ENCODE measurements at regions of chr17 and their contacts with region 1.

Region 1: DNA sequence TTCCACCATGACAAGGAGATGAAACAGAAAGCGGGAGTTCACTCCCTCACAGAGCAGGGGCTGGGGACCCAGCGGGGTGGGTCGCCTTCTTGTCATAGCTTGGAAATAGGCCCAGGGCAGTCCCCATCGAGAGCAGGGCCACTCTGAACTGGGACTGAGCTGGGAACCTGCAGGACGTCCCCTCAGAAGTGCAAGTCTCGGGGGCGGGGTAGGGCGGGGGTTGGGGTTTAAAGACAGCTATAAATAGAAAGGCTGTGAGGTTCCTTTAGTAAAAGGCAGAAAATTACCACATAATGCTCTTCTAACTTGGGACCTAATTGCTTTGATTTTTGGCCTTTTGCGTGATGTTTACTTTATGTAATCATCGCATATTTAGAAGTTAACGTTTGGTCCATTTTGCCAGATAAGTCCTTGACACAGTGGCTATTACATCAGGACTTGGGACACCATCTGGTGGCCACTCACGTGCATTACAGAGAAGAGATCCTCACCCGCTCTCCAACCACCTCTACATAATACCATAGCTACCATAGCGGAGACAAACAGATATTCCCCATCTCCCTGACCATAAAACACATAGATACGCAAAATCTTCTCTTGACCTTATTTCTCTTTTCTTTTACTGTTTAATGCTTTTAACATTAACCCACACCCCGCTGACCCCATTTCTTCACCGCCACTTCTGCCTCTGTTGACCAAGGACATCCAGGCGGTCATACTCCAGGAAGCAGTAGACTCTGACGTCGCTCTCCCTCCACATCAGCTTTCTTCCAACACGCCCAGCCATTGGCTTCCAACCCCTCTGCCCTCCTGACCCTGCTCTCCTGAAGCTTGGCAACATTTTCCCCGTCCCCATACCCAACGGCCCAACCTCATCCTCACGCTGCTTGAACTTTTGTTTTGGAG is 27.5 kb upstream of the PIK3R6 start:
- DNase-seq: peak; percentile 58
- H3K4me3 Mint-ChIP-seq: no peak overlapping the region
- H3K27ac Mint-ChIP-seq: no peak overlapping the region
- H3K4me1 Mint-ChIP-seq: peaks cover 8% of the 10 kb centered on the region
- H3K27me3 Mint-ChIP-seq: peaks cover 57% of the 10 kb centered on the region
- CTCF ChIP-seq: peak; percentile 31

Region 2: GRCh38 chr17:8753976-8754440 is 140.9 kb before region 1 on chr17:
- CTCF ChIA-PET with region 1: no interaction called
- intact Hi-C with region 1: loop called (anchors 2 kb)
- DNase-seq: no peak
- H3K4me3 Mint-ChIP-seq: no peak overlapping the region
- H3K27ac Mint-ChIP-seq: no peak overlapping the region
- H3K4me1 Mint-ChIP-seq: no peaks in the 10 kb centered on the region
- H3K27me3 Mint-ChIP-seq: peaks cover 82% of the 10 kb centered on the region
- CTCF ChIP-seq: no peak

Region 3: DNA sequence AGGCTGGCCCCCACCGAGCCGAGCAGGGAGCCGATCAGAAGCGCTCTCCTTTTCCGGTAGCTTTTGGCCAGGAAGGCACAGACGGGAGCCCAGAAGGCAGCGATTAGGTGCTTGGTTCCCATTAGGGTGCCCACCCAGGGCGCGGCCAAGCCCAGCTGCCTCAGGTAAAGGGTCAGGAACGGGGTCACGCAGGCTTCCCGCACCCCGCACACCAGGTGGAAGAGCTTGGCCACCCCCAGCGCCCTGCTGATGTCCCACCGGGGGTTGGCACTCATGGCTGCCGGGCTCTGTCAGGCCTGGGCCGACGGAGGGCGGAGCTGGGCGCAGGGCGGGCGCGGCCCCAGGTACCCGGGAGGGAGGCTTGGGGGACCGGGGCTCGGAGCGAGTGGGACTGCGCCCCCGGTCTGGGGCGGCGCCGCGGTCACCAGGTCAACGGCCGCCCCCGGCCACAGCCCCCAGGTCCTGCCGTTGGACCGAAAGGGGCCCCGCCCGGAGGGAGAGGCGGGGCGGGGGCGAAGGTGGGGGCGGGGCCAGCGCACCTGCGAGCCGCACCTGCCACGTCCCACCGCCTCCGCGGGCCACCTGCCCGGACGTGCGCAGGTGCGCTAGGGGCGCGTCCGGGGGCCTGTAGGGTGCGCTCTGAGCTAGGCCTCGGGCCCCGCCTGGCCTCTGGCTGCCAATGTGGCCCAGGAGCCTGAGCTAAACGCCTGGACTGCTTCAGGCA is 95.9 kb before region 1 on chr17 and contains the start of gene MFSD6L:
- CTCF ChIA-PET with region 1: interaction called, 10 read pairs
- intact Hi-C with region 1: loop called (anchors 2 kb)
- DNase-seq: peak; percentile 63
- H3K4me3 Mint-ChIP-seq: peak within 1 kb of the TSS; percentile 43
- H3K27ac Mint-ChIP-seq: no peak within 1 kb of the TSS
- H3K4me1 Mint-ChIP-seq: no peaks in the 10 kb centered on the region
- H3K27me3 Mint-ChIP-seq: no peaks in the 10 kb centered on the region
- CTCF ChIP-seq: no peak
- total RNA-seq, gene MFSD6L: 0.21 and 0.44 TPM in 2 replicates

Measured in Calu3 (cell line).